AG04449 (cell line): ENCODE measurements at regions of chr11 and their contacts with region 1.

Region 1: DNA sequence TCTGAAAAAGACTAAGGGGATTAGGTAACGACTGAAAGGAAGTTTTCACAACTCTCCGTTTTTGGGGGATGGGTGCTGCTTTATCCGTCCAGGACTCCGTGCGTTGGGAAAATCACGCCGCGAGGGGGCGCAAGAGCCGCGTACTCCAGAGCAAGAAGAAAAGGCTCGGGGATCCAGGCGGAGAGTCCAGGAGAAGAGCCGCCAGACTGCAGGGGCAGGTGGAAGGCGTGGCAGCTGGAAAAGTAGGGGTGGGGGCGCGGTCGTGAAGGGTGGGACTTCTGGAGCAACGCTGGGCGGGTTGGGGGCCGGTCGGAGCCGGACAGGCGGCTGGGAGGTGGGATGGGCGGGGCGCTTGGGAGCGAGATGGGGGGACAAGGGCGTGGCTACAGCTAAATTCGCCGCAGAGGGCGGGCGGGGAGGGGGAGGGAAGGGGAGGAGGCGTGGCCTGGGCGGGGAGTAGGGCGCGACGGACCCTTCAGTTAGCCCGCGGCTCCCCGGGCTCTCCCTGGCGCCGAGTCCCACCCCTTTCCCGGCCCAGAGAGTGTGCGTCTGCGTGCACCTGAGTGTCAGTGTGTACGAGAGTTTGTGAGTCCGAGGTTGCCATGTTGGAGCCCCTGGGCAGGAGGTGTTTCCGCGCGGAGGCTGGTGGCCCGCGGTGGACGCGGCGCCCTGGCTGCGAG is 613 bp upstream of the ARHGEF17 start:
- DNase-seq: peak; percentile 89
- H3K4me3 ChIP-seq: peak overlapping the region; percentile 81
- CTCF ChIP-seq: peak; percentile 82

Region 2: GRCh38 chr11:73077454-73077853 is 230.0 kb before region 1 on chr11:
- CTCF ChIA-PET with region 1: no interaction called
- POLR2A ChIA-PET with region 1: no interaction called
- DNase-seq: no peak
- H3K4me3 ChIP-seq: no peak overlapping the region
- CTCF ChIP-seq: no peak

Region 3: GRCh38 chr11:73206801-73207200 is 100.7 kb before region 1 on chr11:
- CTCF ChIA-PET with region 1: no interaction called
- POLR2A ChIA-PET with region 1: no interaction called
- DNase-seq: no peak
- H3K4me3 ChIP-seq: no peak overlapping the region
- CTCF ChIP-seq: no peak

Region 4: DNA sequence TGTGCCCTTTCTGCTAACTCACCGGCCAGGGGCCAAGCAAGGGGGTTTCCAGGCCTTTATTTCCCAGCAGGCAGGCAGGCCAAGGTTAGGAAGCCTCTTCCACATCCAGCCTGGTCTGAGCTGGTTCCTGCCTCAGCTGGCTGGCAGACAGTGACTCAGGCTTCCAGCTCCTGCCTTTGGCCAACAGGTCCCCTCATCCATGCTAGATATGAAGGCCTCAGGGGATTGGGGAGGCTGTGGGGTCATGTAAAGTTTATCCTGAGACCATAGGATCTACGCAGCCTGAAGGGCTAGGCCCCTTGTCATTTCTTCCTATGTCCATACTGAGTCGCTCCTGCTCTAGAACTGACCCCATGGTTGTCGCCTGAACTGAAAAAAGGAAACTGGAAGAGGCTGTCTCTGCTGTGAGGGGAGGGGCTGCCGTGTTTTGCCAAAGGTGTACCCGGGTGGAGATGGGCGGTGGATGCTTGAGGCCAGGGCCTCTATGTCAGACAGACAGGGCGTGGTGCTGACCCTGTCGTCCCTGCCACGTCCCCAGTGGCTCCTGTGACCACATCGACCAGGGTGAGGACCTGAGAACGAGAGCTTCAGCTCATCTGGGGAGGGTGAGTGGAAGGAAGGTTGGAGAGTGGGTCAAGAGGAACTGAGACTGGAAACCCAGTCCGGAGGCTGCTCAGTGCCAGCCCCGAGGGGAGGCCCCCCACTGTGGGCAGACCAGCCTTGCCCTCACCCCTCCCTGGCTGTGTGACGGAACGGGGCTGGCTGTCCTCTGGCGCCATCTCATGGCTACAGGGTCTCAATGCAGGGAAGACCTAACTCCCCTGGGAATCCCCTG is 18.4 kb before region 1 on chr11:
- CTCF ChIA-PET with region 1: interaction called, 340 read pairs
- POLR2A ChIA-PET with region 1: no interaction called
- DNase-seq: no peak
- H3K4me3 ChIP-seq: no peak overlapping the region
- CTCF ChIP-seq: peak; percentile 97

Region 5: DNA sequence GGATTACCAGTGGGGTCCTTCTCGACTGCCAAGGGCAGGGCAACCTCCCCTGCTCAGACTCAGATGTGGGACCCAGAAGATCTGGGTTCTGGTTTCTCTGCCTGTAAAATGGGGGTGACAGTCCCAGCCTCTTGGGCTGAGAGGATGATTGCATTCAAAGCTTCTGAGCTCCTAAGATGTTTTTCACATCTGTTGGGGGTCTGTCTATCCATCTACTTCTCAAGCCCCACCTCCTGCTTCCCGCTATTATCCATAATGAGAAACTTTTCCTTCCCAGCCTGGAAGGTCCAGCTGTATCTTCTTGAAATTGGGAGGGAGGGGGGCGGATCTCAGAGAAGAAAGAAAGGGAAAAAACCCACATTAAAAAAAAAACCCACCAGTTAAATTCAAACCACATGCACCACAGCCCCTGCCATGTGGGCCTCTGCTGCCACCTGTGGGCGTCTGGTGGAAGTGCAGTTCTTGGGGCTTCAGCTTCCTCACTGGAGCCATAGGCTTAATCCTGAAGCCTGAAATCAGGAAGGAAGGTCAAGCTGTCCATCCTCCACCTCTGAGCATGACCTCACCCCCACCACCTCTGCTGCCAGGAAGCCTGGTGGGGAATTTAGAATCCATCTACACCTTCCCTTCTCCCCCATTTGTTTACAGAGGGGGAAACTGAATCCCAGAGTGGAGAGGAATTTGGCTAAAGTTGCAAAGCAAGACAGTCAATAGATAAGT is 27.9 kb after region 1 on chr11:
- CTCF ChIA-PET with region 1: interaction called, 605 read pairs
- POLR2A ChIA-PET with region 1: interaction called, 64 read pairs
- DNase-seq: no peak
- H3K4me3 ChIP-seq: no peak overlapping the region
- CTCF ChIP-seq: peak; percentile 91

Region 6: GRCh38 chr11:73376160-73376802 is 68.8 kb after region 1 on chr11 and contains the start of gene RELT:
- CTCF ChIA-PET with region 1: interaction called, 12 read pairs
- POLR2A ChIA-PET with region 1: interaction called, 4 read pairs
- DNase-seq: no peak
- H3K4me3 ChIP-seq: peak within 1 kb of the TSS; percentile 79
- CTCF ChIP-seq: peak; percentile 89

Region 7: GRCh38 chr11:73393479-73394380 is 86.3 kb after region 1 on chr11:
- CTCF ChIA-PET with region 1: interaction called, 26 read pairs
- POLR2A ChIA-PET with region 1: interaction called, 4 read pairs
- DNase-seq: no peak
- H3K4me3 ChIP-seq: no peak overlapping the region
- CTCF ChIP-seq: peak; percentile 86